Common myeloid progenitor, CD34-positive (primary cell): ENCODE measurements at regions of chr3 and their contacts with region 1.

Region 1: DNA sequence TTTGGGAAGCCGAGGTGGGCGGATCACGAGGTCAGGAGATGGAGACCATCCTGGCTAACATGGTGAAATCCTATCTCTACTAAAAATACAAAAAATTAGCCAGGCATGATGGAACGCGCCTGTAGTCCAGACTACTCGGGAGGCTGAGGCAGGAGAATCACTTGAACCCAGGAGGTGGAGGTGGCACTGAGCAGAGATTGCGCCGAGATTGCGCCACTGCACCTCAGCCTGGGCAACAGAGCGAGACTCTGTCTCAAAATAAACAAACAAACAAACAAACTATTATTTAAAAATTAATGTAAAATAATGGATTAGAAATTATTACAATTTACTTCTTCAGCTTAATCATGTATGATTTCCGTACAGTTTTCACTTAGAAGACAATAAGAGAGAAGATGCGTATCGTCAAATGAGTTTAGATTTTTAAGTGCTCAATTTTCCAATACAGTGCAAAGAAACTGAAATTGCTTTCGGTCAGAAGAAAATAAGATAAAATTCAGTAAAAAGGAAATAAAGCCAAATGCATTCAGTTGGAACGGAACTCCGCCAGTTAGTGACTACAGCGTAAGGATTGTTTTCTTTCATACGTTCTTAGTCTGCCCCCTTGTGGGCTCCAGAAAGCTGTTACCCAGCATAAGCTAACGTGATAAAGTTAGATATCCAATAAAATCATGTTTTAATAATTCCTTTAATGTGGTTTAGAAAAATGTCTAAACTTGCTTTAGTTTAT is 24.8 kb downstream of the AADAC start:
- DNase-seq: peak; percentile 77 to 90 (median 87)
- H3K4me3 ChIP-seq: peak overlapping the region in 4 of 7 experiments; percentile 19 to 67 (median 35)
- H3K27ac ChIP-seq: no peak overlapping the region
- H3K4me1 ChIP-seq: peaks cover 6 to 28% (median 15%) of the 10 kb centered on the region in 4 experiments
- H3K27me3 ChIP-seq: no peaks in the 10 kb centered on the region

Region 2: GRCh38 chr3:151439652-151440129 is 399.1 kb before region 1 on chr3:
- CTCF ChIA-PET with region 1: interaction called, 61 read pairs
- POLR2A ChIA-PET with region 1: no interaction called
- DNase-seq: peak; percentile 77 to 89 (median 86)
- H3K4me3 ChIP-seq: no peak overlapping the region
- H3K27ac ChIP-seq: no peak overlapping the region
- H3K4me1 ChIP-seq: no peaks in the 10 kb centered on the region
- H3K27me3 ChIP-seq: no peaks in the 10 kb centered on the region

Region 3: DNA sequence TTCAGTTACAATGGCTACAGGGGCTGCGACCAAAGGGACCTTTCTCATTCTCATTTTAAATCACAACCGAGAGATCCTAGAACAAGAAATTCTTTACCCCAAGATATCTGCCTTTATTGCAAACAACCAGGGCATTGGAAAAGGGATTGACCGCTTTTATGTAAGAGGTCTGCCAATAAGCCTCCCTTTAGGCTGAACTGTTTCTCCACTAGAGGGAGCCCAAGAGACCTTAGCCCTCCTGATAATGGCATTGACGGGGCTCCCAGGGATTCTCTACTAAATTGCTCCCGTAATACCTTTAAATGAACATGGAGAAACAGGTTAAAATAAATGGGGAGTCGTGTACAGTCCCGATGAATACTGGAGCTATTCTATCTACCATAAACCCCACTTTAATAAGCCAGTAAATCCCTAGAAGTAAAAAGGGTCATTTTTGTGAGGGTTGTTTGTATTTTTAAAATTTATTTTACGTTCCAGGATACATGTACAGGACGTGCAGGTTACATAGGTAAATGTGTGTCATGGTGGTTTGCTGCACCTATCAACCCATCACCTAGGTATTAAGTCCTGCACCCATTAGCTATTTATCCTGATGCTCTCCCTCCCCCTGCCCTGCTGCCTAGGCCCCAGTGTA is 370.3 kb before region 1 on chr3:
- CTCF ChIA-PET with region 1: interaction called, 27 read pairs
- POLR2A ChIA-PET with region 1: no interaction called
- DNase-seq: peak; percentile 64 to 73 (median 68)
- H3K4me3 ChIP-seq: no peak overlapping the region
- H3K27ac ChIP-seq: no peak overlapping the region
- H3K4me1 ChIP-seq: no peaks in the 10 kb centered on the region
- H3K27me3 ChIP-seq: no peaks in the 10 kb centered on the region

Region 4: GRCh38 chr3:151813799-151814198 is 24.9 kb before region 1 on chr3 and contains the start of gene AADAC:
- CTCF ChIA-PET with region 1: no interaction called
- POLR2A ChIA-PET with region 1: no interaction called
- DNase-seq: no peak
- H3K4me3 ChIP-seq: no peak within 1 kb of the TSS
- H3K27ac ChIP-seq: no peak within 1 kb of the TSS
- H3K4me1 ChIP-seq: no peaks in the 10 kb centered on the region
- H3K27me3 ChIP-seq: no peaks in the 10 kb centered on the region

Region 5: DNA sequence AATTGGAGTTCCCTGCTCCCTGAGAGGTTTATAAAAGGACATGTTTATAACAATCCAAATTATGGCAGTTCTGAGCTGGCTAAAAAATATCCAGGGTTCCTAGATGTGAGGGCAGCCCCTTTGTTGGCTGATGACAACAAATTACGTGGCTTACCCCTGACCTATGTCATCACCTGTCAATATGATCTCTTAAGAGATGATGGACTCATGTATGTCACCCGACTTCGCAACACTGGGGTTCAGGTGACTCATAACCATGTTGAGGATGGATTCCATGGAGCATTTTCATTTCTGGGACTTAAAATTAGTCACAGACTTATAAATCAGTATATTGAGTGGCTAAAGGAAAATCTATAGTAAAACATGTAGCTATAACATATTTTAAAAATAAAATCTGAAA is 10.9 kb before region 1 on chr3:
- CTCF ChIA-PET with region 1: interaction called, 17 read pairs
- POLR2A ChIA-PET with region 1: no interaction called
- DNase-seq: no peak
- H3K4me3 ChIP-seq: no peak overlapping the region
- H3K27ac ChIP-seq: no peak overlapping the region
- H3K4me1 ChIP-seq: no peaks in the 10 kb centered on the region
- H3K27me3 ChIP-seq: no peaks in the 10 kb centered on the region

Region 6: DNA sequence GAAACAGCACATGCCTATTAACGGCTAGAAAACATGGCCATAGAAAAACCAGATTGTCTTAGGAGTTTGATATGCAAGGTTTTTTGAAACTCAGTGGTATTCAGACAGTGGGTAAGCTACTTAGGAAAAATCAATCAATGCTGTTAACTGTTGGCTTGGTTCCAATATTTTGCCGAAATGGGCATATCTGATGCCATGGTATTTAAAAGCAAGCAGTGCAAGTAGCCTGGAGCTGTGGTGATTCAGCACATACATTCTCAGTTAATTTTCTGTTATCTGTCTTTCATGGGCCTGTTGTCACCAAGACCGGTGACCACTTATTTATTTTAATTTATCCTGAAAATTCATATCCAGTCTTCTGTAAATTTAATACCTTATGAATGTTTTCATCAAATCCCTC is 17.4 kb after region 1 on chr3:
- CTCF ChIA-PET with region 1: no interaction called
- POLR2A ChIA-PET with region 1: no interaction called
- DNase-seq: no peak
- H3K4me3 ChIP-seq: no peak overlapping the region
- H3K27ac ChIP-seq: no peak overlapping the region
- H3K4me1 ChIP-seq: peaks cover 0 to 6% (median 0%) of the 10 kb centered on the region in 4 experiments
- H3K27me3 ChIP-seq: no peaks in the 10 kb centered on the region

Region 7: GRCh38 chr3:151918253-151919029 is 79.7 kb after region 1 on chr3:
- CTCF ChIA-PET with region 1: interaction called, 12 read pairs
- POLR2A ChIA-PET with region 1: no interaction called
- DNase-seq: peak; percentile 64 to 78 (median 72)
- H3K4me3 ChIP-seq: no peak overlapping the region
- H3K27ac ChIP-seq: no peak overlapping the region
- H3K4me1 ChIP-seq: peaks cover 0 to 13% (median 9%) of the 10 kb centered on the region in 4 experiments
- H3K27me3 ChIP-seq: no peaks in the 10 kb centered on the region